MCF 10A (cell line): ENCODE measurements at regions of chr4 and their contacts with region 1.

Region 1: GRCh38 chr4:41214136-41214824 is at the start of gene APBB2:
- DNase-seq: peak; percentile 97
- H3K4me3 Mint-ChIP-seq: peak within 1 kb of the TSS; percentile 98
- H3K27ac Mint-ChIP-seq: peak within 1 kb of the TSS; percentile 97
- H3K4me1 Mint-ChIP-seq: peaks cover 12% of the 10 kb centered on the region
- H3K27me3 Mint-ChIP-seq: no peaks in the 10 kb centered on the region
- CTCF ChIP-seq: peak; percentile 86
- total RNA-seq, gene APBB2: 159 and 201 TPM in 2 replicates

Region 2: DNA sequence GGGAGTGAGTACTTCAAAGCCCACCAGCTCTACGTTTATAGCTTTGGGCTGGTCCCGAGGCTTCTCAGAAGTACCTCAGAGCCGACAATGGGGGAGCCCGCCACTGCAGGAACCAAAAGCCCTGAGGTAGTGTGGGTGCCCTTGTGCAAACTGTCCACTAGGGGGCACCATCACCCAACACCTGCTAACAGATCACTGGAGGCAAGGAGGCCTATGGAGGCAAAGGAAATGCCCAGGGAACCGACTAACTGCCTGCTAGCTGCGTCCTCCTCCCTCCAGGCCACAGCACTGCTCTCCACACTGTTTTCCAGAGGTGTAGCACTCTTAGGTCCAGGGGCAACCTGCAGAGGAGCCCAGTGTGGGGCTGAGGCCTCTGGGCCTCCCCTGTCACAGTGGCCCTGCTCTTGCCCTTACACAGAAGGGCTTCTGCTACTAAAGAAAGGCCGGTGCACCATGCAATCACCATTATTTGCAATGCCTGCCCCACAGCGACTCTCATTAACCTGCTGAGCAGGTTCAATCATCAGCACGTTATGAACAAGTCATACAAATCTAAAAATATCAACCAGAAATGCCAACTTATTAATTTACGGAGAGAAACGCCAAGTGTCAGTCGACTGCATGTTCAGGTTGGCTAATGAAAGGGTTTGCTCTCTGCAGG is 305.4 kb before region 1 on chr4:
- CTCF ChIA-PET with region 1: interaction called, 14 read pairs
- POLR2A ChIA-PET with region 1: interaction called, 8 read pairs
- intact Hi-C with region 1: loop called (anchors 1 kb)
- DNase-seq: peak; percentile 93
- H3K4me3 Mint-ChIP-seq: peak overlapping the region; percentile 38
- H3K27ac Mint-ChIP-seq: peak overlapping the region; percentile 93
- H3K4me1 Mint-ChIP-seq: peaks cover 23% of the 10 kb centered on the region
- H3K27me3 Mint-ChIP-seq: no peaks in the 10 kb centered on the region
- CTCF ChIP-seq: peak; percentile 92

Region 3: DNA sequence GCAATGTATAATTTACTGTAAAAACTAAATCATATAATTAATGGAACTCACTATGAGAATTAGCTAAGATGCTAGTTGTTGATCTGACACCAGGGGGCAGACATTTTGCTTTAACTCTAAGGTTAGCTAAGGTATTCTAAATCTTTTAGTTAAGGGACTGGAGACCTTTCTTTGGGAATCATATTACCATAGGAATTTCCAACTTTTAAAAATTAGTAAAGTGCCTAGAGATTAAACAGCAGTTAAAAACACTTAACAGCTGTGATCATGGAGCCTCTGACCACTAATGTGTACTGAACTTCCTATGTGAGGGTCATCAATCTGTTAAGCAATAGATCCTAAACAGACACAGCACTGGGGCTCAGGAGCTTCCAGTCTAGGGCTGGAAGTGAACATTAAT is 237.9 kb before region 1 on chr4:
- CTCF ChIA-PET with region 1: interaction called, 28 read pairs
- POLR2A ChIA-PET with region 1: interaction called, 17 read pairs
- intact Hi-C with region 1: loop called (anchors 1 kb)
- DNase-seq: peak; percentile 77
- H3K4me3 Mint-ChIP-seq: no peak overlapping the region
- H3K27ac Mint-ChIP-seq: peak overlapping the region; percentile 55
- H3K4me1 Mint-ChIP-seq: peaks cover 15% of the 10 kb centered on the region
- H3K27me3 Mint-ChIP-seq: no peaks in the 10 kb centered on the region
- CTCF ChIP-seq: peak; percentile 49

Region 4: GRCh38 chr4:41120297-41121217 is 93.7 kb before region 1 on chr4:
- CTCF ChIA-PET with region 1: interaction called, 31 read pairs
- POLR2A ChIA-PET with region 1: interaction called, 113 read pairs
- intact Hi-C with region 1: loop called (anchors 1 kb)
- DNase-seq: peak; percentile 91
- H3K4me3 Mint-ChIP-seq: peak overlapping the region; percentile 77
- H3K27ac Mint-ChIP-seq: peak overlapping the region; percentile 92
- H3K4me1 Mint-ChIP-seq: peaks cover 60% of the 10 kb centered on the region
- H3K27me3 Mint-ChIP-seq: no peaks in the 10 kb centered on the region
- CTCF ChIP-seq: no peak

Region 5: GRCh38 chr4:41160012-41160789 is 54.1 kb before region 1 on chr4:
- CTCF ChIA-PET with region 1: interaction called, 12 read pairs
- POLR2A ChIA-PET with region 1: interaction called, 46 read pairs
- intact Hi-C with region 1: loop called (anchors 1 kb)
- DNase-seq: peak; percentile 97
- H3K4me3 Mint-ChIP-seq: peak overlapping the region; percentile 61
- H3K27ac Mint-ChIP-seq: peak overlapping the region; percentile 94
- H3K4me1 Mint-ChIP-seq: peaks cover 62% of the 10 kb centered on the region
- H3K27me3 Mint-ChIP-seq: no peaks in the 10 kb centered on the region
- CTCF ChIP-seq: no peak

Region 6: GRCh38 chr4:41575207-41575606 is 360.9 kb after region 1 on chr4:
- CTCF ChIA-PET with region 1: no interaction called
- POLR2A ChIA-PET with region 1: no interaction called
- intact Hi-C with region 1: no loop called
- DNase-seq: peak; percentile 69
- H3K4me3 Mint-ChIP-seq: peak overlapping the region; percentile 48
- H3K27ac Mint-ChIP-seq: peak overlapping the region; percentile 96
- H3K4me1 Mint-ChIP-seq: peaks cover 45% of the 10 kb centered on the region
- H3K27me3 Mint-ChIP-seq: no peaks in the 10 kb centered on the region
- CTCF ChIP-seq: no peak